ENCODE measurements at regions of chr15 and their contacts with region 1.

Region 1: DNA sequence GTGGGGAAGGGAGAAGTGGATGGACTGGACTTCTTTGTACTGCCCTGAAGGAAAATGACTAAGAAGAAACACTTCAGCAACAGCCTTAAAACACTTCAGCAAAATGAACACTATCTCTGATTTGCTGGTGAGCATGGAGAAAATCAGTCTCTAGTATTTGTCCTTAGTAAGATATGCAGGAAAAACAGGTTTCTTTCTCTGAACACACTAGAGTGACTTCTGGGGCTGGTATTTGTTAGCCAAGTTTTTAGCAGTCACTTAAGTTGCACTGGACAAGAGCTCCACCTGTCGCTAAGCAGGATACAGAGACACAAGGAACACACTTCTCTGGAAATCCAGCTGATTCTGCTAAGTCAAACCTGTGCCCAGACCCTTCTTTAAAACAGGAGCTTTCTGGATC is 65.2 kb downstream of the CHAC1 start:
- DNase-seq: peak; percentile 68 to 70
- H3K4me3 ChIP-seq: no peak overlapping the region
- H3K27ac ChIP-seq: peak overlapping the region; percentile 41 to 57 (median 43)
- H3K4me1 ChIP-seq: peaks cover 10 to 21% of the 10 kb centered on the region in 2 donors
- H3K27me3 ChIP-seq: no peaks in the 10 kb centered on the region
- CTCF ChIP-seq: peak; percentile 16 to 86 (median 71)
- POLR2A ChIP-seq: no peak

Region 2: GRCh38 chr15:40226736-40227135 is 791.8 kb before region 1 on chr15:
- intact Hi-C with region 1: no loop called
- DNase-seq: no peak
- H3K4me3 ChIP-seq: no peak overlapping the region
- H3K27ac ChIP-seq: no peak overlapping the region
- H3K4me1 ChIP-seq: peaks cover 0 to 3% of the 10 kb centered on the region in 2 donors
- H3K27me3 ChIP-seq: no peaks in the 10 kb centered on the region
- CTCF ChIP-seq: no peak
- POLR2A ChIP-seq: no peak

Region 3: GRCh38 chr15:40906091-40906990 is 112.2 kb before region 1 on chr15:
- intact Hi-C with region 1: loop called (anchors 5 kb)
- DNase-seq: peak; percentile 98 to 99
- H3K4me3 ChIP-seq: peak overlapping the region in 1 of 3 donors; percentile 30
- H3K27ac ChIP-seq: peak overlapping the region; percentile 91 to 92 (median 91)
- H3K4me1 ChIP-seq: peaks cover 23 to 35% of the 10 kb centered on the region in 2 donors
- H3K27me3 ChIP-seq: no peaks in the 10 kb centered on the region
- CTCF ChIP-seq: peak; percentile 70 to 97 (median 84)
- POLR2A ChIP-seq: peak in 1 of 2 donors; percentile 64

Region 4: GRCh38 chr15:40941528-40942336 is 76.8 kb before region 1 on chr15:
- intact Hi-C with region 1: loop called (anchors 10 kb)
- DNase-seq: peak; percentile 74 to 76
- H3K4me3 ChIP-seq: peak overlapping the region in 2 of 3 donors; percentile 21 to 47
- H3K27ac ChIP-seq: peak overlapping the region; percentile 64 to 90 (median 89)
- H3K4me1 ChIP-seq: peaks cover 15 to 30% of the 10 kb centered on the region in 2 donors
- H3K27me3 ChIP-seq: no peaks in the 10 kb centered on the region
- CTCF ChIP-seq: peak in 5 of 6 experiments; percentile 15 to 97 (median 81)
- POLR2A ChIP-seq: peak in 1 of 2 donors; percentile 48

Measured in thyroid gland (tissue), 4 donors.